ENCODE measurements at regions of chr12 and their contacts with region 1.

Region 1: DNA sequence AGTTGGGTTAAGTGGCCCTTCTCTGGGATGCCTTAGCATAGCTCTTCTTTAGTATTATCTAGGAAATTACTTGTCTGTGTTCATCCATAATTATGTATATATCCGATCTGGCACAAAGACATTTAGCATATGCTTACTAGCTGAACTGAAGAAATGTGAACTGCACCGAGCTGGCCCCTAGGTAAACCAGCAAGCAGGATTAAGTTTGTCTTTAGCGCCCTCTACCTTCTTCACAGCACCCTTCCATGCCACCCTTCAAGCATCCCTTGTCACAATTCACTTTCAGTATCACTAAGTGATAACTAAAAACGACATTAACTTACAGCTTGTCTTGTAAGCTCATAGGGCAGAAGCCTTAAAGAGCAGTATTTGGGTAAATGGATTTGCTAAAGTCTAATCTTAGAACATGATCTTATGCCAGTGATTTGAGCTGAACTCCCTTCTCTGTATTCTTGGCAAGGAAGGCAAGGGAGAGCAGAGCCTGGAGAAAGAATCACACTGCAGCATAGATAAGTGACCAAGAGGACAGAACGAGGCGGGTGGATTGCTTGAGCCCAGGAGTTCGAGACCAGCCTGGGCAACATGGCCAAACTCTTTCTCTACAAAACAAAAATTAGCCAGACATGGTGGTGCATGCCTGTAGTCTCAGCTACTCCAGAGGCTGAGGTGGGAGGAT is 2.6 kb upstream of the HAL start:
- DNase-seq: peak; percentile 67
- ATAC-seq: peak; percentile 97
- H3K4me3 Mint-ChIP-seq: no peak overlapping the region
- H3K27ac Mint-ChIP-seq: no peak overlapping the region
- H3K4me1 Mint-ChIP-seq: peaks cover 3% of the 10 kb centered on the region
- H3K27me3 Mint-ChIP-seq: no peaks in the 10 kb centered on the region
- CTCF ChIP-seq: peak; percentile 71

Region 2: GRCh38 chr12:95870897-95871296 is 127.9 kb before region 1 on chr12:
- CTCF ChIA-PET with region 1: interaction called, 11 read pairs
- POLR2A ChIA-PET with region 1: no interaction called
- intact Hi-C with region 1: no loop called
- DNase-seq: no peak
- ATAC-seq: no peak
- H3K4me3 Mint-ChIP-seq: no peak overlapping the region
- H3K27ac Mint-ChIP-seq: no peak overlapping the region
- H3K4me1 Mint-ChIP-seq: peaks cover 3% of the 10 kb centered on the region
- H3K27me3 Mint-ChIP-seq: no peaks in the 10 kb centered on the region
- CTCF ChIP-seq: no peak

Region 3: GRCh38 chr12:95942524-95943329 is 56.0 kb before region 1 on chr12 and contains the start of gene CCDC38:
- CTCF ChIA-PET with region 1: interaction called, 11 read pairs
- POLR2A ChIA-PET with region 1: interaction called, 10 read pairs
- intact Hi-C with region 1: no loop called
- DNase-seq: peak; percentile 90
- ATAC-seq: peak; percentile 97
- H3K4me3 Mint-ChIP-seq: peak within 1 kb of the TSS; percentile 85
- H3K27ac Mint-ChIP-seq: peak within 1 kb of the TSS; percentile 91
- H3K4me1 Mint-ChIP-seq: peaks cover 9% of the 10 kb centered on the region
- H3K27me3 Mint-ChIP-seq: no peaks in the 10 kb centered on the region
- CTCF ChIP-seq: no peak
- total RNA-seq, gene CCDC38: 0.18 to 0.34 TPM

Region 4: GRCh38 chr12:95959107-95959506 is 39.6 kb before region 1 on chr12:
- CTCF ChIA-PET with region 1: interaction called, 23 read pairs
- POLR2A ChIA-PET with region 1: no interaction called
- intact Hi-C with region 1: no loop called
- DNase-seq: no peak
- ATAC-seq: no peak
- H3K4me3 Mint-ChIP-seq: no peak overlapping the region
- H3K27ac Mint-ChIP-seq: no peak overlapping the region
- H3K4me1 Mint-ChIP-seq: no peaks in the 10 kb centered on the region
- H3K27me3 Mint-ChIP-seq: no peaks in the 10 kb centered on the region
- CTCF ChIP-seq: no peak

Region 5: DNA sequence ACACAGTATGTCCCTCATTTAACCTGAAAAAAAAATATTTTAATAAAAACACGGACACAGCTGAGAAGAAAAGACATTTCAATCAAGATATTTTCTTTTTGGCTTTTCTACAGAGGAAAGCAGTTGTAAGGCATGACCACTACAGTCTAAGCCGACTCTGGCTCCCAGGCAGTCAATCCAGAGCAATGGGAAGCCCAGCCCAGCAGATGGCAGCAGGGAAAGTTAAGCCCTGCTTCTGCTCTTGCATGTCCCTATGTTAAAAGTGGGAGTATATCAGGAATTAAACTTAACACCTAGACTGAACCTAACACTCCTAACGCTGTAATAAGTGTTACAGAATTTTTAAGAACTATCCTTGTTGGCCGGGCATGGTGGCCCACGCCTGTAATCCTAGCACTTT is 16.9 kb after region 1 on chr12:
- CTCF ChIA-PET with region 1: interaction called, 13 read pairs
- POLR2A ChIA-PET with region 1: interaction called, 3 read pairs
- intact Hi-C with region 1: no loop called
- DNase-seq: no peak
- ATAC-seq: no peak
- H3K4me3 Mint-ChIP-seq: no peak overlapping the region
- H3K27ac Mint-ChIP-seq: no peak overlapping the region
- H3K4me1 Mint-ChIP-seq: no peaks in the 10 kb centered on the region
- H3K27me3 Mint-ChIP-seq: no peaks in the 10 kb centered on the region
- CTCF ChIP-seq: no peak

Region 6: GRCh38 chr12:96177013-96177412 is 178.3 kb after region 1 on chr12:
- CTCF ChIA-PET with region 1: no interaction called
- POLR2A ChIA-PET with region 1: no interaction called
- intact Hi-C with region 1: no loop called
- DNase-seq: peak; percentile 91
- ATAC-seq: peak; percentile 97
- H3K4me3 Mint-ChIP-seq: peak overlapping the region; percentile 7
- H3K27ac Mint-ChIP-seq: peak overlapping the region; percentile 86
- H3K4me1 Mint-ChIP-seq: peaks cover 31% of the 10 kb centered on the region
- H3K27me3 Mint-ChIP-seq: no peaks in the 10 kb centered on the region
- CTCF ChIP-seq: no peak